Panc1 (cell line): ENCODE measurements at regions of chr6 and their contacts with region 1.

Region 1: GRCh38 chr6:43150051-43150751 is 20.9 kb upstream of the SRF start:
- DNase-seq: no peak
- ATAC-seq: no peak; the same call in 1 of the 2 replicates
- H3K4me3 ChIP-seq: no peak overlapping the region
- H3K27ac ChIP-seq: no peak overlapping the region
- H3K4me1 ChIP-seq: peaks cover 2% of the 10 kb centered on the region
- H3K27me3 ChIP-seq: no peaks in the 10 kb centered on the region
- CTCF ChIP-seq: no peak

Region 2: DNA sequence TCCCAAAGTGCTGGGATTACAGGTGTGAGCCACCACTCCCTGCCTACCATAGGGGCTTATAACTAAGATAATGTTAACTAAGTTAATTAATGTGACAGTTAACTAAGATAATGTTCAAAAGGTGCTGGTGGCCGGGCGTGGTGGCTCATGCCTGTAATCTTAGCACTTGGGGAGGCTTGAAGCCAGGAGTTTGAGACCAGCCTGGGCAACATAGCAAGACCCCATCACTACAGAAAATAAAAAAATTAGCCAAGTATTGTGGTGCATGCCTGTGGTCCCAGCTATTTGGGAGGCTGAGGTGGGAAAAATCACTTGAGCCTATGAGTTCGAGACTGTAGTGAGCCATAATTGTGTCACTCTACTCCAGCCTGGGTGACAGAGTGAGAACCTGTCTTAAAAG is 11.9 kb before region 1 on chr6:
- CTCF ChIA-PET with region 1: interaction called, 3 read pairs
- POLR2A ChIA-PET with region 1: interaction called, 19 read pairs
- in situ Hi-C with region 1: no loop called
- intact Hi-C with region 1: no loop called
- DNase-seq: no peak
- ATAC-seq: no peak
- H3K4me3 ChIP-seq: no peak overlapping the region
- H3K27ac ChIP-seq: no peak overlapping the region
- H3K4me1 ChIP-seq: peaks cover 12% of the 10 kb centered on the region
- H3K27me3 ChIP-seq: no peaks in the 10 kb centered on the region
- CTCF ChIP-seq: no peak

Region 3: DNA sequence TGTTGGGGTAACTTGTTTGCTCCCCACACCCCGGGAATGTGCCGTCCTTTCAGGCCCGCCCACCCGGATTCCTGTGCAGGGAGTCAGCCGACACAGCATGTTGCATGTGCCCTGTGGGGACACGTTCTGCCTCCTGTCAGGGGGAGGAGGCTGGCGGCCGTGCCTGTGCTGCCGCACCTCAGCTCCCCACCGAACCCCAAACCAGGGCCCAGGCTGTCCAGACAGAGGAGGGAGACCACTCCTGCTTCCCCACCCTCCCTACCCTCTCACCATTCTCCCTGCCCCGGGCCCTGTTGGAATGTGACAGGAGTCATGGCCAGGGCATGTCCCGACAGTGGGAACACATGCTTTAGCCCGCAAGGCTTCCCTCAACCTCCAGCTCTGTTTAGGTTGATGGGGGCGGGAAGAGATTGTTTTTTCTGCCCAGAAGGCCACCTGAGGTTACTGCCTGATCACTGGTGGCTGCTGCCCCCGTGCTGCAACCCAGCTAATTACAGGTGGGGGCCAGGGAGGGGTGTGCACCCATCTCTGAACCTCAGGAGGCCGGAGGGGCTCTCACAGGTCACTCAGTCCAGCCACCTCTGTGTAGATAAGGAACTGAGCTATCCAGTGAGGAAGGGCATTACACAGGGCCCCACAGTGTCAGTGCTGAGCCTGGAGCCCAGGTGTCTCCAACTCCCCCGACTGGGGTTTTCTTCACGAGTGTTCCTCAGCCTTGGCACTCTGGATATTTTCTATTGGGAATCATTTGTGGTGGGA is 346.3 kb after region 1 on chr6:
- CTCF ChIA-PET with region 1: no interaction called
- POLR2A ChIA-PET with region 1: interaction called, 10 read pairs
- in situ Hi-C with region 1: no loop called
- intact Hi-C with region 1: no loop called
- DNase-seq: no peak
- ATAC-seq: peak; percentile 57
- H3K4me3 ChIP-seq: no peak overlapping the region
- H3K27ac ChIP-seq: no peak overlapping the region
- H3K4me1 ChIP-seq: peaks cover 19% of the 10 kb centered on the region
- H3K27me3 ChIP-seq: no peaks in the 10 kb centered on the region
- CTCF ChIP-seq: peak; percentile 80